Activated CD4-positive, alpha-beta T cell treated with anti-CD3 and anti-CD28 coated beads, Interleukin-2, amount 10 ng/mL, durations not matched to agents 24 days and 14 days (primary cell): ENCODE measurements at regions of chr4 and their contacts with region 1.

Region 1: DNA sequence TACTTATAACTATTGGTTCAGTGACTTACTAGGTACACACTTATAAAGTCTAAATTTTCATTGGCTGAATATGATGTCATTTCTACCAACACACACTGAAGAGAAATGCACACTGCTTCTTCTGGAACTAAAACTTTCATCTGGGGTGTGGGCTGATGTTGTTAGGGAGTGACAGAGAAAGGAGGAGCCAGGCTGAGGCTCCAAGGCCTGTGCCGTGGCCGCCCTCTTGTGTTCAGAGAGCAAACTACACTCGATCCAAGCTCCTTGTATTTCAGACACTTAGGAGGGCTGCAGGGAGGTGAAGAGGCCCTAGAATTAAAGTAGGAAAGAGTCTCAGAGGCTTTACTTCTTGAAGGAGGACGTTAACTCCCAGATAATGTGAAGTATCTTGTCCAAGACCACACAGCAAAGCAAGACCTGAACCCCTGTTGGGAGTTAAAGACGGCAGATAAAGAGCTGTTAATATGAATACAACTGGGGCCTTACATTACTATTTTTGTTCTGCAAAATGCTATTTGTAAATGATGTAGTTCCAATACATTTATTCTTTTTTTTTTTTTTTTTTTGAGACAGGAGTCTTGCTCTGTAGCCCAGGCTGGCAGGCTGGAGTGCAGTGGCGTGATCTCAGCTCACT is 137.5 kb downstream of the AFAP1 start:
- DNase-seq: peak; percentile 94
- H3K4me3 Mint-ChIP-seq: no peak overlapping the region
- H3K27ac Mint-ChIP-seq: no peak overlapping the region
- H3K4me1 Mint-ChIP-seq: peaks cover 12% of the 10 kb centered on the region
- H3K27me3 Mint-ChIP-seq: no peaks in the 10 kb centered on the region

Region 2: GRCh38 chr4:7761720-7762119 is 40.5 kb before region 1 on chr4:
- intact Hi-C with region 1: loop called (anchors 1 kb)
- DNase-seq: peak; percentile 83
- H3K4me3 Mint-ChIP-seq: no peak overlapping the region
- H3K27ac Mint-ChIP-seq: no peak overlapping the region
- H3K4me1 Mint-ChIP-seq: peaks cover 30% of the 10 kb centered on the region
- H3K27me3 Mint-ChIP-seq: no peaks in the 10 kb centered on the region

Region 3: GRCh38 chr4:7857238-7857701 is 55.1 kb after region 1 on chr4:
- intact Hi-C with region 1: loop called (anchors 10 kb)
- DNase-seq: no peak
- H3K4me3 Mint-ChIP-seq: peak overlapping the region; percentile 67
- H3K27ac Mint-ChIP-seq: peak overlapping the region; percentile 85
- H3K4me1 Mint-ChIP-seq: peaks cover 50% of the 10 kb centered on the region
- H3K27me3 Mint-ChIP-seq: no peaks in the 10 kb centered on the region

Region 4: DNA sequence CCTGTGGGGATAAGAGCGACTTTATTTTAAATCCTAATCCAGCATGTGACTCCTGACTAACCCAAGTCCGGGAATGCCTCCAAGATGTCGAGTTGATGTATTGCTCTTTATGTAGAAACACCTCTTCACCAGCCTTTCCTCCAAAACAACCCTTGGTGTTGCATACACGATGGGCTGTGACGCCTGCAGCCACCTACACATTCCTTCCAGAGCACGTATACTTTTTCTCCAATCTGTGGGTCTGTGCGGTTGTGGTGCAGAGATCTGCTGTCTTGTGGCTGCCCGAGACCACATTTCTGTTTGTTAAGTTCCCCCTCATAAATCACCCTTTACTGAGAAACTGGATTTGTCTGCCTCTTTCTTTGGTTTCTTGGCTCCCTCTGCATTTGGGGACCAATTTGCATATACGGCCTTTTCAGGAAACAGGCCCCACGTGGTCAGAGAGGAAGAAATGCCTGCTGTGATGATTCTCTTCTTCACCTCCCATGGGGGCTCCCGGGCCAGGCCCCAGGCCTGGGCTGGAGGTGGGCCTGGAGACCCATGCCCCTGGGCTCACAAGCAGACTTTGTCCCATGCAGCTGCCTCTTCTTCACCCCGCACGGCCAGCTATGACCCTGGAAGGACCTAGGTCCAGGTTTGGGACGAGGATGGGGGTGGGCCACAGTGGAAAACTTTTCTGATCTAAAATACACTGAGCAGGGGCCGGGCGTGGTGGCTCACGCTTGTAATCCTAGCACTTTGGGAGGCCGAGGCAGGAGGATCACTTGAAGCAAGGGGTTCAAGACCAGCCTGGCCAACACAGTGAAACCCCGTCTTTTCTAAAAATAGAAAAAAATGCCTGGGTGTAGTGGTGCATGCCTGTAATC is 158.8 kb after region 1 on chr4:
- intact Hi-C with region 1: loop called (anchors 5 kb)
- DNase-seq: peak; percentile 91
- H3K4me3 Mint-ChIP-seq: peak overlapping the region; percentile 63
- H3K27ac Mint-ChIP-seq: peak overlapping the region; percentile 97
- H3K4me1 Mint-ChIP-seq: peaks cover 56% of the 10 kb centered on the region
- H3K27me3 Mint-ChIP-seq: peaks cover 5% of the 10 kb centered on the region